ENCODE measurements at regions of chr6 and their contacts with region 1.

Region 1: GRCh38 chr6:147506704-147507114 is 1.8 kb upstream of the SAMD5 start:
- DNase-seq: peak; percentile 87
- H3K4me3 ChIP-seq: peak overlapping the region; percentile 83
- H3K27ac ChIP-seq: no peak overlapping the region
- H3K4me1 ChIP-seq: no peaks in the 10 kb centered on the region
- H3K27me3 ChIP-seq: no peaks in the 10 kb centered on the region
- CTCF ChIP-seq: peak; percentile 80

Region 2: DNA sequence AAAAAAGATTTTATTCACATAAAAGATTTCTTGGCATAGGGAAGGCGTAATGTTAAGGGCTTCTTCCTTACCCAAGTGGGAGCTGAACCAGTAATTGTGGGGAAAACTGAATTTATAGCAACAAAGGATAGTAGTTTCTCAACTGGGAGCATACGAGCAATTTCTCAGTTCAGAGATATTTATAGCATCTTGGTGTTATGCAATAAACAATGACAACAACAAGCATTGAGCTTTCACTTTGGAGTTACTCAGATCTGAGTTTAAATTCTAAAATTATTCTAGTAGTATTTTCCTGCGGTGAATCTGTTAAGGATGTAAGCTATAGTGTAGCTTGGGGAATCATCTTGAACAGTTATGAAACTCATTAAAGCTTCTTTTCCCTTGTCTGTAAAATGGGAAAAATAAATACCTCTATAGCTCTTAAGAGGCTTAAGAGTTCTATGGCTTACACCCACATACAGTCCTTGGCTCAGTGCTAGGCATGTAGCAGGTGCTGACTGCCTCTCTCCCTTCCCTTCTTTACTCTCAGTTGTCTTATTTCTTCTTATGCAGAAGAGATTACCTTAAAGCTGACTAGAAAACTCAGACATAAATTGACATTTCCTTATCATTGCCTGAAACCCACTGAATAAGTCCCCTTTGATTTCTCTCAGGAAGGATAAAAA is 60.6 kb after region 1 on chr6:
- intact Hi-C with region 1: no loop called
- DNase-seq: no peak
- H3K4me3 ChIP-seq: no peak overlapping the region
- H3K27ac ChIP-seq: no peak overlapping the region
- H3K4me1 ChIP-seq: no peaks in the 10 kb centered on the region
- H3K27me3 ChIP-seq: no peaks in the 10 kb centered on the region
- CTCF ChIP-seq: no peak

Region 3: DNA sequence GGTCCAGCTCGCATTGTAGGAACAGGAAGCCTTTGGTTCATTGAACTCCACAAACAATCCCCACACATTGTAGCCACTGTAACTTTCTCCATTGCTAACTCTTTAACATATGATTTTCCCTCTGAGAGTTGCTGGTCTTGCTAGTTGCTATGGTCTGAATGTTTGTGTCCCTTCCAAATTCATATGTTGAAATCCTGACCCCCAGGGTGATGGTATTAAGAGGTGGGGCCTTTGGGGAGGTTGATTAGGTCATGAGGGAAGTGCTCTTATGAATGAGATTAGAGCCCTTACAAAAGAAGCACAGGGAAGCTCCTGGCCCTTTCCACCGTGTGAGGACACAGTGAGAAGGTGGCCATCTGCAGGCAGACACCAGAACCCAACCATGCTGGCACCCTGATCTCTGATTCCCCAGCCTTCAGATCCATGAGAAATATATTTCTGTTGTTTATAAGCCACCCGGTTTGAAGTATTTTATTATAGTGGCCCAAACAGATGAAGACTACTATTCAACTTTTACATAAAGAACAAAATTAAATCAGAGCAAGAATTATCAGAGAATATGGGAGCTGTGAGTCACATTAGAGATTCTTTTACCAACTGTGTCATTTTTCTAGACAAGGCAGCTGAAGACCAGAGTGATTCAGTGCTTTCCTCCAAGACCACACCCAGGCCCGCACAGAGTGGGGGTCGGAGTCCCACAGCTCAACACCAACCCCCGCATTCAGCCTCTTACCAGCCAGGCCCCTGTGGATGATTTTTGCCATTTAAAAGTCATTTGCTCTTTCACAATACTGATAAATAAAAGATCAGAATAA is 144.7 kb after region 1 on chr6:
- intact Hi-C with region 1: loop called (anchors 10 kb)
- DNase-seq: no peak
- H3K4me3 ChIP-seq: no peak overlapping the region
- H3K27ac ChIP-seq: no peak overlapping the region
- H3K4me1 ChIP-seq: no peaks in the 10 kb centered on the region
- H3K27me3 ChIP-seq: no peaks in the 10 kb centered on the region
- CTCF ChIP-seq: peak; percentile 13

Region 4: GRCh38 chr6:147970975-147971374 is 464.3 kb after region 1 on chr6:
- intact Hi-C with region 1: loop called (anchors 5 kb)
- DNase-seq: no peak
- H3K4me3 ChIP-seq: no peak overlapping the region
- H3K27ac ChIP-seq: no peak overlapping the region
- H3K4me1 ChIP-seq: no peaks in the 10 kb centered on the region
- H3K27me3 ChIP-seq: no peaks in the 10 kb centered on the region
- CTCF ChIP-seq: peak; percentile 22

Region 5: GRCh38 chr6:148166339-148166968 is 659.7 kb after region 1 on chr6:
- intact Hi-C with region 1: loop called (anchors 2 kb)
- DNase-seq: no peak
- H3K4me3 ChIP-seq: no peak overlapping the region
- H3K27ac ChIP-seq: no peak overlapping the region
- H3K4me1 ChIP-seq: no peaks in the 10 kb centered on the region
- H3K27me3 ChIP-seq: no peaks in the 10 kb centered on the region
- CTCF ChIP-seq: peak; percentile 54

Region 6: DNA sequence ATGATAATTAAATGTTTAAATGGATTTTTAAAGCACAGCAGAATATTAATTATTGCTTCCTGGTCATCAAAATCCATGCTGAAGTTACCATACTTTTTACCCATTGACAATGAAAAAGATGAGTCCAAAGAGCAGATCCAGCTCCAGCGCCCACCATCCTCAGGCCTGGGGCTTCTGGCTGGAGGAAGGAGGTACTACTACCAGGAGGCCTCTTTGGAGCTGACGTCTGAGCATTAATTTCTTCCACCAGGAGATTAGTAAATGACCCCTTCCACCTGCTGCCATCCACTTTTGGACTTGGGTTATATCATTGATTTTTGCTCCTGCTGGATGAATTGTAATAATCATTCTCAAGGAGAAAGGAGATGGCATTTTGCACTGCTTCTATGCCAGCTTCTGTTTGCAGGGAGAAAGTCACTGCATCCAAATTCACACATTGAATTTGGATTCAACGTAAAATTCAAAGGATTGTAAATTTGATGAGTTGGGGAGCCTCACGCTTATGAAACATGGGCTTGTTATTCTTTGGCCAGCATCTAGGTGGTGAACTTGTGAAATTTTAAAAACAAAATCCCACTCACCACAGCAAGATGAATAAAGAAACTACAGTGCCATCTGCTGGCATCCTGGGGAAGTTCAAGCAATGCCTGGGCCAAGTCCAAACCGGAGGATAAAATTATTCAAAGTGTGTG is 957.8 kb after region 1 on chr6:
- intact Hi-C with region 1: loop called (anchors 10 kb)
- DNase-seq: peak; percentile 70
- H3K4me3 ChIP-seq: no peak overlapping the region
- H3K27ac ChIP-seq: no peak overlapping the region
- H3K4me1 ChIP-seq: no peaks in the 10 kb centered on the region
- H3K27me3 ChIP-seq: no peaks in the 10 kb centered on the region
- CTCF ChIP-seq: peak; percentile 95